Sigmoid colon (tissue), 7 donors: ENCODE measurements at regions of chrX and their contacts with region 1.

Region 1: DNA sequence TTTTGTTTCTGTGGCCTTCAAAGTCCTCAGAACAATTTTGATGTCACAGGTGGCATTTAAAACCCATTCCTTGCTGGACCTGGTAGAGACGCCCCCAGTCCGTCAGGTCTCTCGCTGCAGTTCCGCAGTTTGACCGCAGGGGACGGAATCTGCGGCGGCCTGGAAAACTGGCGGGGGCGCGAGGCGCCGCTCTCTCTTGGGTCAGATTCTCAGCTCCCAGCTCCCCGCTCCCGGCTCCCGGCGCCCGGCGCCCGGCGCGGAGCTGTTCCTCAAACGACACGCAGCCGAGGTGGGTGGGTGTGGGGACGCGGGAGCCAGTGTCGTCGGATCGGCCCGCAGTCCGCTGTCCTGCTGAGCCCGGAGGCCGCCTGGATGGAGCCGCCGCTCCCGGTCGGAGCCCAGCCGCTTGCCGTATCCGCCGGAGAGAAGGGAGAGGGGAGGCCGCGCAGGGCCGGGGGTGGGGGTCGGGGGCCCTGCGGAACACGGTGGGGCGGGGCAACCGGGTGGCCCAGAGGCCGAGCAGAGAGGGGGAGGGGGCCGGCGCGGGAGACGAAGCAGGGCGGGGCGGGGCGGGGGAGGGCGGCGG is at the start of gene OCRL:
- DNase-seq: peak; percentile 85
- H3K4me3 ChIP-seq: peak within 1 kb of the TSS; percentile 62 to 77 (median 69)
- H3K27ac ChIP-seq: peak within 1 kb of the TSS; percentile 83 to 89 (median 84)
- H3K4me1 ChIP-seq: peaks cover 0 to 4% (median 0%) of the 10 kb centered on the region in 4 donors
- H3K27me3 ChIP-seq: no peaks in the 10 kb centered on the region
- CTCF ChIP-seq: peak; percentile 59 to 69 (median 63)
- EP300 ChIP-seq: no peak
- POLR2A ChIP-seq: no peak
- total RNA-seq, gene OCRL: 15.1 to 24.1 (median 17.6) TPM

Region 2: GRCh38 chrX:128622296-128622695 is 917.9 kb before region 1 on chrX:
- intact Hi-C with region 1: no loop called
- DNase-seq: no peak
- H3K4me3 ChIP-seq: no peak overlapping the region
- H3K27ac ChIP-seq: no peak overlapping the region
- H3K4me1 ChIP-seq: no peaks in the 10 kb centered on the region
- H3K27me3 ChIP-seq: no peaks in the 10 kb centered on the region
- CTCF ChIP-seq: no peak
- EP300 ChIP-seq: no peak
- POLR2A ChIP-seq: no peak

Region 3: DNA sequence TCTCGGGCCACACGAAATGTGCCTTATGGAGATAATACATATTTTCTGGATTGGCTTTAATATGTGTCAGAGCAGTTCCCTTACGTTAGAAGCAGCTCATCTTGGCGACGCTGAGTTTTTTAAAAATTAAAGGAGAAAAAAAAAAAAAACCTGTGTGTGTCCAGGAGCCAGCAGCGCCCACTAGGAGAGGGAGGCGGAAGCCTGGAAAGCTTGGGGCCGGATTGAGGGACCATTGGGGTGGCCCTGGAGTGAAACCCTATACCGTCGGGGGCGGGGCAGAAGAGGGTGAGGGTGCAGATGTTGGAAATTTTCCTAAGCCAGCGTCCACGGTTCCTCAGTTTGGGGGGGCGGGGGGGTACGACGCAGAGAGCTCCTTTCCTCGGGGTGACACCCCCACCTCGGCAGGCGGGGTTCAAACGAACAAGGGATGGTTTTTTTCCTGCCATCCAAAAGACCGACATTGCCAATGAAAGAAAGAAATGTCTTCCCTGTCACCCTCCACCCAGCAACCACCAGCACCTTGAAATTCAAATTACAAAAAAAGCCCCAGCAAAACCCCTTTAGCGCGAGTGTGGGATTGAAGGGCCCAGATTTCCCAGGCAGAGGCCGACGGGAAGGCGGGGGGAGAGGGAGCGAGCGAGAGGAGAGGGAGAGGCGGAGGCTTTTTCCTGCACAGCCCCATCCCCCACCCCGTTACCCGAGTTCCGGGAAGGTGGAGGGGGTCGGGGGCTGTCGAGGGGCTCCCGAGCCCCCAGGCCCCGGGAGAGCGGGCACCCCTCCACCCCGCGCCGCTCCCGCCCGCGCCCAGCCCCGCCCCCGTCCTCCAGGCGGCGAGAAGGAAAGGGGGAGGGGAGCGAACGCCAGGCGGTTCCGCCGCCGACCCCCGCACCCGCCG is 17.7 kb before region 1 on chrX:
- intact Hi-C with region 1: loop called (anchors 2 kb)
- DNase-seq: peak; percentile 80
- H3K4me3 ChIP-seq: peak overlapping the region; percentile 75 to 87 (median 79)
- H3K27ac ChIP-seq: peak overlapping the region; percentile 91 to 94 (median 93)
- H3K4me1 ChIP-seq: peaks cover 0 to 16% (median 6%) of the 10 kb centered on the region in 4 donors
- H3K27me3 ChIP-seq: no peaks in the 10 kb centered on the region
- CTCF ChIP-seq: peak in 1 of 4 experiments; percentile 10
- EP300 ChIP-seq: no peak
- POLR2A ChIP-seq: no peak